Activated B cell treated with CpG ODN at 0.5 μM for 24 hours (primary cell): ENCODE measurements at regions of chr5 and their contacts with region 1.

Region 1: GRCh38 chr5:168486136-168486879 is at the start of gene RARS1:
- DNase-seq: peak; percentile 82
- ATAC-seq: peak; percentile 94
- H3K4me3 Mint-ChIP-seq: peak within 1 kb of the TSS; percentile 100
- H3K27ac Mint-ChIP-seq: peak within 1 kb of the TSS; percentile 89
- H3K4me1 Mint-ChIP-seq: peaks cover 30% of the 10 kb centered on the region
- H3K27me3 Mint-ChIP-seq: peaks cover 3% of the 10 kb centered on the region
- CTCF ChIP-seq: peak; percentile 73
- total RNA-seq, gene RARS1: 75.9 and 85.9 TPM in 2 replicates

Region 2: DNA sequence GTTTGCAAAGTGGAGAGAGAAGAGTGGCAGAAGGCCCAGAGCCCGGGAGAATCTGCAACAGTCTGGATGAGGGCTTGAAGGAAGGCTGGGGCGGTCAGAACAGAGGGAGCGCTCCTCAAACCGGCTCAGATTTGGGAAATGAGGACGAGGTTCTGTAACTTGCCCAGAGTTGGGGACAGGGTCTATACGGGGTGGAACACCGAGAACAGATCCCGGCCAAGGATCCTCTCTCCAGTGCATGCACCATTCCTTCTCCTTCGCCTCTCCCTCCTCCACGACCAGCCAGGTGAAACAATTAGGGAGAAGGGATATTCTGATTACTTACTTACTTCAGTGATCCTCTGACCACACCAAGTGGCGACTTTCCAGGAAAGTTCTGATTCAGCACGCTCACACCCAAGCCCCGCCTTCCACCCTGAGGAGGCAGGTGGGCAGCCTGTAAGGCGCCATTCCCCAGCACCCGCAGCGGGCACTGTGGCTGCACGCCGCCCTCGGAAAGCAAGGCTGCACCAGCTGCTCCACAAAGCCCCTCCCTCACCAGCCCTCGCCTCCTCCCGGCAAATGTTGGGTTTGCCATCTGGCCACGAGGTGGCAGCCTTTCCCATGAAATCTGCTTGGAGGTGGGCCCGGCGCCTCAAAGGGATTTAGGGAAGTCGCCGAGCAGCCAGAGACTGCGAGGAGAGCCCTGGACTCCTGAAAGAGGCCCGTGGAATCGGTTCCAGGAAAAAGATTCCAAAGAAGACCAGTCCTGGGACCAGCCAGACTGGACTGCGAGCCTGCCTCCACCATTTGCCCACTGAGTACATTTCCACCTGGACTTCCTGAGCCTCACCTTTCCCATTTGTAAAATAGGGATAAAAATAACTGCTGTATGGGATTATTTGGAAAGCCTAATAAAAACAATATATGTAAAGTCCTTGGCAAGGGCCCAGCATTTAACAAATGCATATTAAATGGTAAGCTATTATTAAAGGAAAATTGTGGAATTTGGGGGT is 217.1 kb before region 1 on chr5:
- CTCF ChIA-PET with region 1: interaction called, 3 read pairs
- POLR2A ChIA-PET with region 1: no interaction called
- intact Hi-C with region 1: loop called (anchors 2 kb)
- DNase-seq: peak; percentile 55
- ATAC-seq: peak; percentile 70
- H3K4me3 Mint-ChIP-seq: peak overlapping the region; percentile 45
- H3K27ac Mint-ChIP-seq: no peak overlapping the region
- H3K4me1 Mint-ChIP-seq: peaks cover 9% of the 10 kb centered on the region
- H3K27me3 Mint-ChIP-seq: peaks cover 25% of the 10 kb centered on the region
- CTCF ChIP-seq: peak; percentile 59

Region 3: GRCh38 chr5:168579488-168580226 is 93.3 kb after region 1 on chr5:
- CTCF ChIA-PET with region 1: no interaction called
- POLR2A ChIA-PET with region 1: interaction called, 8 read pairs
- intact Hi-C with region 1: loop called (anchors 1 kb)
- DNase-seq: peak; percentile 96
- ATAC-seq: peak; percentile 95
- H3K4me3 Mint-ChIP-seq: peak overlapping the region; percentile 84
- H3K27ac Mint-ChIP-seq: peak overlapping the region; percentile 95
- H3K4me1 Mint-ChIP-seq: peaks cover 48% of the 10 kb centered on the region
- H3K27me3 Mint-ChIP-seq: no peaks in the 10 kb centered on the region
- CTCF ChIP-seq: no peak